Naive thymus-derived CD4-positive, alpha-beta T cell (primary cell): ENCODE measurements at regions of chr1 and their contacts with region 1.

Region 1: GRCh38 chr1:201468844-201469511 is at the start of gene PHLDA3:
- DNase-seq: peak in 1 of 9 donors; percentile 77
- ATAC-seq: peak; percentile 66
- H3K4me3 ChIP-seq: no peak within 1 kb of the TSS
- H3K4me3 Mint-ChIP-seq: peak within 1 kb of the TSS in 9 of 10 donors; percentile 23 to 92 (median 55)
- H3K27ac ChIP-seq: no peak within 1 kb of the TSS
- H3K27ac Mint-ChIP-seq: peak within 1 kb of the TSS in 1 of 9 donors; percentile 74
- H3K4me1 ChIP-seq: no peaks in the 10 kb centered on the region
- H3K4me1 Mint-ChIP-seq: peaks cover 0 to 22% (median 8%) of the 10 kb centered on the region in 7 donors
- H3K27me3 ChIP-seq: peaks cover 0 to 6% of the 10 kb centered on the region in 2 donors
- H3K27me3 Mint-ChIP-seq: peaks cover 39 to 55% (median 40%) of the 10 kb centered on the region in 5 donors
- total RNA-seq, gene PHLDA3: 0.19 to 22.4 (median 1.1) TPM

Region 2: DNA sequence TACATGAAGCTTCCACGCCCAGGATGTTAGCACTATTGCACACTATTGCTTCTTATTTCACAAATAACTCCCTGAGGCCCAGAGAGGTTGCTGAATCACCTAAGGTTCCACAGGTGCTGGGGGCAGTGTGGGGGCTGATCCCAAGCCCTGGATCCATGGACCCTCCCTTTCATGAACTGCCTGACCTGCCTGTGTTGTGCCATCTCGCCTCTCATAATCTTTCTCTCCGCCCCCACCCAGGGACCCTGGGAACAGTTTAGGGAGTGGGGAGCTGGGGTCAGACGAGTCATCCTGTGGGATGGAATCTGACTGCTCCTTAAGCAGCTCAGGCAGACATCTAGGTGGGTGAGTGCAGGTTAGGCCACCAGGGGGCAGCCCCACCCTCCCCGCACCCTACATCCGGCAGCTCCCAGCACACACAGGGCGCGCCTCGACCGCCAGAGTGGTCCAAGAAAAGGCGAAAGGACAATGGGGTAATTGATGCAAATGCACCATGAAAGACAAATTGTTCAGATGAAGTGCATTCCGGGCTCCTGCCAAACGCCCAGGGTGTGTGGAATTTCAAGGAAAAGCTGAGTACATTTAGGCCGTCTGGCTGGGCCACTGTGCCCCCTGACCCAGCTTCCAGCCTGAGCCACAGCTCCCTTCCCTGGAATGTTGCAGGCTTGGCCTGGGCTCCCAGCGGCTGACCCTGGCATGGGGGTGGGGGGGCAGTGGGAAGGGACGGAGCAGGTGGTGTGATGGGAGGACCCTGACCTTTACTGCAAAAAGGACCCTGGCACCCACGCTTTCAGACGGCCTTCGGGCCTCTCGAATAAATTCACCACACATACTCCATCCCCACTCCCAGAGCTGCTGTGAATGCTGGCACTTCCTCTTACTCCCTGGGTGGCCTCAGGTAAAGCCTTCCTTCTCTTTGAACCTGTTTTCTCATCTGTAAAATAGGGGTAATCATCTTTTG is 20.8 kb before region 1 on chr1:
- CTCF ChIA-PET with region 1: no interaction called
- POLR2A ChIA-PET with region 1: no interaction called
- intact Hi-C with region 1: loop called in 1 of 2 experiments (anchors 1 kb)
- DNase-seq: peak in 7 of 9 donors; percentile 21 to 62 (median 36)
- ATAC-seq: peak; percentile 90
- H3K4me3 ChIP-seq: no peak overlapping the region
- H3K4me3 Mint-ChIP-seq: no peak overlapping the region
- H3K27ac ChIP-seq: no peak overlapping the region
- H3K27ac Mint-ChIP-seq: peak overlapping the region in 1 of 9 donors; percentile 34
- H3K4me1 ChIP-seq: peaks cover 0 to 4% of the 10 kb centered on the region in 2 donors
- H3K4me1 Mint-ChIP-seq: peaks cover 0 to 35% (median 4%) of the 10 kb centered on the region in 7 donors
- H3K27me3 ChIP-seq: no peaks in the 10 kb centered on the region
- H3K27me3 Mint-ChIP-seq: peaks cover 7 to 27% (median 17%) of the 10 kb centered on the region in 5 donors

Region 3: DNA sequence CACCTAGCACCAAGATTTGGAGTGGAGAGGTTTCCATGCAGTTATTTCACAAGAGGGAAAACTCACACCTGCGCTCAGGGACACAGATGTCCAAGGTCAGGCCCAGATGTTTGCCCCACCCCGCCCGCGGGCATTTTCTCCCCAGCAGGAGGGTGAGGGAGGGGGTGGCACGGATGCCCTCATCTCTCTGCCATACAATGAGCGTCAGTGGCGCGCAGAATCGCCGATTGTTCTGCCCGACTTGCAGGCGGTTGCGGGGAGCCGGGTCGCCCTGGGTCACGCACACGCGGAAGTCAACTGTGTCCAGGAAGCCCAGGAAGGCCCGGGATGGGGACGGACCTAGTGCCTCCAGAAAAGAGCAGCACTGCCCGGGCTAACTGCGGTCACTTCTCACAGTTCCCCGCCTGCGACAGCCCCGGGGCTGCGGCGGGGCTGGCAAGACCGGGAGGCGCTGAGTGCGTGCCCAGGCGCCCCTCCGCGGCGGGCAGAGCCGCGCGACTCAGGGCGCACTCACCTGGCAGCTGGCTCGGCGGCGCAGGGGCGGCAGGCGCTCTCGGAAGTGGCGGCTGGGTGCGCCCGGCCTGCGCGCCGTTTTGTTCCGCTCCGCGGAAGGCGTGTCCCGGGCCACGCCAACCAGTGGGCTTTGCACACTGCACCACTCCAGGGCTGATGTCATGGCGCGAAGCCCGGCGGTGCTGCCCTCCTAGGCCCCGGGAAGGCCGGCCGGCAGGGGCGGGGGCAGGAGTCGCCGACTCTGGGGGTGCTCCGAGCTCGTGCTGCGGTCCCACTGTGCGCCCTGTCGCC is 37.8 kb after region 1 on chr1 and contains the start of gene CSRP1:
- CTCF ChIA-PET with region 1: no interaction called
- POLR2A ChIA-PET with region 1: no interaction called
- intact Hi-C with region 1: loop called in 1 of 2 experiments (anchors 5 kb)
- DNase-seq: peak; percentile 64 to 84 (median 80)
- ATAC-seq: peak; percentile 97
- H3K4me3 ChIP-seq: peak within 1 kb of the TSS; percentile 87
- H3K4me3 Mint-ChIP-seq: peak within 1 kb of the TSS; percentile 88 to 94 (median 91)
- H3K27ac ChIP-seq: peak within 1 kb of the TSS; percentile 74
- H3K27ac Mint-ChIP-seq: peak within 1 kb of the TSS; percentile 83 to 97 (median 91)
- H3K4me1 ChIP-seq: peaks cover 20 to 28% of the 10 kb centered on the region in 2 donors
- H3K4me1 Mint-ChIP-seq: peaks cover 30 to 61% (median 57%) of the 10 kb centered on the region in 7 donors
- H3K27me3 ChIP-seq: no peaks in the 10 kb centered on the region
- H3K27me3 Mint-ChIP-seq: no peaks in the 10 kb centered on the region
- total RNA-seq, gene CSRP1: 24.2 to 83.1 (median 37.7) TPM